ENCODE measurements at regions of chr12 and their contacts with region 1.

Region 1: GRCh38 chr12:67648521-67649260 is at the start of gene DYRK2:
- DNase-seq: peak; percentile 86 to 90
- ATAC-seq: peak; percentile 62 to 75 (median 72)
- H3K4me3 ChIP-seq: peak within 1 kb of the TSS; percentile 96
- H3K27ac ChIP-seq: peak within 1 kb of the TSS; percentile 99
- H3K4me1 ChIP-seq: peaks cover 27% of the 10 kb centered on the region
- H3K27me3 ChIP-seq: no peaks in the 10 kb centered on the region
- CTCF ChIP-seq: peak; percentile 16
- total RNA-seq, gene DYRK2: 11.0 to 46.4 (median 21.5) TPM

Region 2: DNA sequence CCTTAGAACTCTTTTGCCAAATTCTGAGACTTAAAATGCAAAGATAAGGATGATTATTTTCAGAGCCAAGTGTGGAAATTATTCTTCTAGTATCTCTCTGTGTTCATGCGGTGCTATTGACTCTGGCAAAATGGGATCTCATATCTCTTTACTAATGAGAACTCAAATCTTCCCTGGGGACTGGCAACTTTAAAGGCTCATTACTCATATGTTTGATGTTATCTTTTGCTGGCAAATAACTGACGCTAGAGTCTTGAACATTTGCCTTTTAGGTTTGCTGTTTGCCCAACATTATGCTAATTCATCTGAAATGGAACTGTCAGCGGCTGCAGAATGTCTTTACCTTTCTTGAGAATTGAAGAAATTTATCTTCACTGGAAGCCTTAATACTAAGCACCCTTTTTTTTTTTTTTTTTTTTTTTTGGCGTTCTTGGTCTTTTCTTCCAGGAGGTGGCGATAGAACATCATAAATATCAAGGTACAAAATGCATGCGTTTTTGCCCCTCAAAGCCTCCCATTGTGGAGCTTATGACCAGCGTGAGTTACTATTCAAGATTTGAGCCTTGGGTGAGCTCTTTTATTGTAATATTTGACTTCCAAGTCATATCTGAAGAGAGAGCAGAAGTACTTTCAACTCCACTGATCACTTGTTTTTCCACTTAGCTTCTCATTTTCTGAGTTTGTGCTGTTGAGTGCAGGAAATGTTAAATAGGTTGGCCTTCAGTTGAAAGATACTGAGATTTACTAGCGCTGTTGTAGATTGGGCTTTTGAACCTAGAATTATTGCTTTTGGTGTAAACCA is 292.9 kb before region 1 on chr12:
- intact Hi-C with region 1: loop called in 1 of 2 experiments (anchors 2 kb)
- DNase-seq: no peak
- ATAC-seq: peak; percentile 61 to 85 (median 72)
- H3K4me3 ChIP-seq: peak overlapping the region; percentile 62
- H3K27ac ChIP-seq: peak overlapping the region; percentile 78
- H3K4me1 ChIP-seq: peaks cover 28% of the 10 kb centered on the region
- H3K27me3 ChIP-seq: no peaks in the 10 kb centered on the region
- CTCF ChIP-seq: peak; percentile 55

Region 3: GRCh38 chr12:67515679-67516340 is 132.9 kb before region 1 on chr12:
- intact Hi-C with region 1: loop called in 1 of 2 experiments (anchors 5 kb)
- DNase-seq: no peak
- ATAC-seq: peak; percentile 56 to 87 (median 74)
- H3K4me3 ChIP-seq: peak overlapping the region; percentile 43
- H3K27ac ChIP-seq: peak overlapping the region; percentile 84
- H3K4me1 ChIP-seq: peaks cover 34% of the 10 kb centered on the region
- H3K27me3 ChIP-seq: no peaks in the 10 kb centered on the region
- CTCF ChIP-seq: no peak

Region 4: GRCh38 chr12:67797185-67797741 is 148.6 kb after region 1 on chr12:
- intact Hi-C with region 1: loop called in 1 of 2 experiments (anchors 10 kb)
- DNase-seq: peak in 1 of 2 donors; percentile 67
- ATAC-seq: peak; percentile 93 to 96 (median 94)
- H3K4me3 ChIP-seq: peak overlapping the region; percentile 11
- H3K27ac ChIP-seq: peak overlapping the region; percentile 83
- H3K4me1 ChIP-seq: peaks cover 32% of the 10 kb centered on the region
- H3K27me3 ChIP-seq: no peaks in the 10 kb centered on the region
- CTCF ChIP-seq: no peak

Region 5: DNA sequence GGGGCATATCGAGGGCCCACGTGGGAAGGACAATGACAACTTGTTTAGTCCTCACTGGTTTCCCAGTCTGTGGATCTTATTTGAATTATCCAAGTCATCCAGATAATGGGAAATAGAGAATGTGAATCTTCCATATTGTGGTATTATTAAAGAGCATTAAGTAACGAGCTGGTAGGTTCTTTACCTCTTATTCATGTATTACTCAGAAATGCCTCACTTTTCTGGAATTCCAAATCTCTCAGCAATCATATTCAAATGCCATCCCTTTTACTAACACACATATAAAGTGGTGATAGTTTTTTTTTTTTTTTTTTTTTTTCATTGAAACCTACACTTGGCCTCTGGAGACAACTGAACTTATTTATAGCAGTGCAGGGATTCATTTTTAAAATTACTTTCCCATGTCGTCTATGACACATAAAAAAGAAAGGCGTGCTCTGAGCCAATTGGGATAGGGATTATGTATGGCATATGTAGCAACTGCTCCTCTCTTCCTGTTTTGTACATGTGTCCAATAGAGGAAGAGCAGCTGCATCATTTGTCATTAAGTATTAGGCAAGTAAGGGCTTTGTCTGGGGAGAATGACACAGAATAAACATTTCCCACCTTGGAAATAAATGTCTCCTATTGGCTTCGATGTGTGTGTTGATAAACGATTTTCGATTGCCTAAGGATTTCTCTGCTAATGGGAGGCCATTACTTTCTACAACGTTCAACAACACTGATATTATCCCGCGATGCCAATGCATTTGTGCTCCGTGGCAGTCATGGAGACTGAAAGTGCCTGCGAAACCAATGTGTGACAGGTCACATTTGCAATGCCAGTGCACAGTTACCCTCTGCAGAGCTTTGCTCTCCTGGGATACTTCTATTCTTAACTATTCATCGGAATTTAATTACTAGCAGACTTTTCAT is 261.9 kb after region 1 on chr12:
- intact Hi-C with region 1: loop called in 1 of 2 experiments (anchors 5 kb)
- DNase-seq: peak in 1 of 2 donors; percentile 33
- ATAC-seq: peak; percentile 86 to 93 (median 92)
- H3K4me3 ChIP-seq: peak overlapping the region; percentile 48
- H3K27ac ChIP-seq: peak overlapping the region; percentile 89
- H3K4me1 ChIP-seq: peaks cover 16% of the 10 kb centered on the region
- H3K27me3 ChIP-seq: no peaks in the 10 kb centered on the region
- CTCF ChIP-seq: no peak

Region 6: DNA sequence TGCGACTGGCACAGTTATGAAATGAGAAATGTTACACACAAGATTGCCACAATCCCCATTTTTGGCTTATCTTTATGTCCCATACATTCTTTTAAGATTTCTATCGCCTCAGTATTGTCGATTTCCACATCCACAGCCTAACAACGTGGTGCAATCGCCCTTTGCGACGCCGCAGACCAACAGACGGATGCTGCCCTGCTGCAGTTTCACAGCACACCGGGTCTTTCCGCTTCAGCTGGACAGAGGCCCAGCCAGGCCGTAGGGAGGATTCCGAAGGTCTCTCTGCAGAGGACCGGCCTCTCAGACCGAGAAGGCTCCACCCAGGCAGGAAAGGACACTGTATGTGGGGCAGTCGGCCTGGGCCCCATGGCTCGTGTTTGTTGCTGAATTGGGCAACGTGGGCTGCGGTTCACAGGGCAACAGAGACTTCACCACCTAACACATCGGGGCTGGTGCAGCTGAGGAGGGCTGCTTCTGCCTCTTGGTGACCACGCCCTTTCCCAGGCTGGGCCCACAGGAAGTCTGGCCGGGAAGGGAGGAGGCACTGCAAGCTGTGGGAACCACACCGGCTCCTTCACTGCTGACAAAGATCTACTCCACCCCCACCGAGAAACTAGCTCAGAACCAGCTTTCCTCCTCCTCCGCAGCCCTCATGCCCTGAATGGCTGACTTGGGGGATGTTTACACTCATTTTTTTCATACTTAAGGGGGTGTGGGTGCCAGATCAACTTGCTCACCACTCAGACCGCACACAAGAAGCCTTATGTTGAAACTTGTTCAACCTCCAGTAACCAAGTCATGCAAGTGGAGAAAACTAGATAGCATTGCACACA is 716.4 kb after region 1 on chr12:
- intact Hi-C with region 1: no loop called
- DNase-seq: peak; percentile 89 to 94
- ATAC-seq: peak; percentile 87 to 92 (median 90)
- H3K4me3 ChIP-seq: peak overlapping the region; percentile 55
- H3K27ac ChIP-seq: peak overlapping the region; percentile 74
- H3K4me1 ChIP-seq: peaks cover 7% of the 10 kb centered on the region
- H3K27me3 ChIP-seq: no peaks in the 10 kb centered on the region
- CTCF ChIP-seq: no peak